Activated T-helper 1 cell treated with anti-CD3 and anti-CD28 coated beads, Interleukin-12 subunit alpha, Interleukin-12 subunit beta, Interleukin-2, Interleukin-4 antibody, amounts not matched to agents 30 ng/mL and 10 ng/mL and 1 ng/mL, durations not matched to agents 14 hours and 24 hours and 36 hours (primary cell): ENCODE measurements at regions of chr1 and their contacts with region 1.

Region 1: GRCh38 chr1:28581536-28582247 is 10.4 kb upstream of the RAB42 start:
- DNase-seq: peak; percentile 94
- H3K4me3 Mint-ChIP-seq: peak overlapping the region; percentile 99
- H3K27ac Mint-ChIP-seq: peak overlapping the region; percentile 85
- H3K4me1 Mint-ChIP-seq: peaks cover 31% of the 10 kb centered on the region
- H3K27me3 Mint-ChIP-seq: no peaks in the 10 kb centered on the region

Region 2: GRCh38 chr1:28369371-28370238 is 212.1 kb before region 1 on chr1 and contains the start of gene PHACTR4:
- intact Hi-C with region 1: loop called (anchors 5 kb)
- DNase-seq: peak; percentile 78
- H3K4me3 Mint-ChIP-seq: peak within 1 kb of the TSS; percentile 91
- H3K27ac Mint-ChIP-seq: peak within 1 kb of the TSS; percentile 95
- H3K4me1 Mint-ChIP-seq: peaks cover 36% of the 10 kb centered on the region
- H3K27me3 Mint-ChIP-seq: peaks cover 3% of the 10 kb centered on the region
- total RNA-seq, gene PHACTR4: 28.9 and 31.8 TPM in 2 replicates

Region 3: GRCh38 chr1:28518000-28518744 is 63.5 kb before region 1 on chr1:
- intact Hi-C with region 1: loop called (anchors 1 kb)
- DNase-seq: peak; percentile 86
- H3K4me3 Mint-ChIP-seq: peak overlapping the region; percentile 92
- H3K27ac Mint-ChIP-seq: peak overlapping the region; percentile 92
- H3K4me1 Mint-ChIP-seq: peaks cover 33% of the 10 kb centered on the region
- H3K27me3 Mint-ChIP-seq: no peaks in the 10 kb centered on the region

Region 4: DNA sequence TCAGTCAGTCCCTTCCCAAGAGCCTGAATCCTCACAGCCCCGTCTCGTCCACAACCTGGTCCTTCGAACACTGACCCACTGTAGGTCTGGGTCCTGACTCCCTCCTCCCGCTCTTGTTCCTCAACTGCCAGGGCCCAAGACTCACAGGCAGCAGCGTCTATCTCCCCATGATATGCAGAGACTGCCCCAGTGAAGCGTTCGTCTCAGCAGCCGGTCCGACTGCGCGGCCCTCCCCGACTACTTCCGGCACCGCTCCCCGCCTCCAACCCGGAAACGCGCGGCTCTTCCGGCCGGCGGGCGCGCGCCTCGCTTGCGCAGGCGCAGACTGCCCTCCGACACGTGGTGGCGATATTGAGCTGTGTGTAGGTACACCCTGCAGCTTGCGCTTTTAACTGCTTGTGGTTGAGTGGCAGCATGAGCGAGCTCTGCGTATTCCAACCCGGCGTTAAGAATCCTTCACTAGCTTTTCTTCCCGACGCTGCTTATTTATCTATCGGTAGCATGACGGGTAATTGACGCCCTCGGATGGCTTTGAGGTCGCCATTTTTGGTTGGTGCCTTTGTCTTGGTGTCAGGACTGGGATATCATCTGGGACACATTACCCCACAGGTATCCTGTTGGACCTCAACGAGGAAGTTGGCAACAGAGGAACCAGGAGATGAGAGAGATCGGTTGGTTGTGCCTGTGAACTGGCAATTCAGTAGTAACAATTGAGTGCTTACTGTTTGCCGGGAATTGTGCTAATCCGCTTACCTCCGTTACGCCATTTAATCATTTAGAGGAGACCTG is 61.3 kb after region 1 on chr1 and contains the start of gene TAF12:
- intact Hi-C with region 1: loop called (anchors 1 kb)
- DNase-seq: peak; percentile 85
- H3K4me3 Mint-ChIP-seq: peak within 1 kb of the TSS; percentile 99
- H3K27ac Mint-ChIP-seq: peak within 1 kb of the TSS; percentile 99
- H3K4me1 Mint-ChIP-seq: peaks cover 55% of the 10 kb centered on the region
- H3K27me3 Mint-ChIP-seq: no peaks in the 10 kb centered on the region
- total RNA-seq, gene TAF12: 32.8 and 33.9 TPM in 2 replicates

Region 5: DNA sequence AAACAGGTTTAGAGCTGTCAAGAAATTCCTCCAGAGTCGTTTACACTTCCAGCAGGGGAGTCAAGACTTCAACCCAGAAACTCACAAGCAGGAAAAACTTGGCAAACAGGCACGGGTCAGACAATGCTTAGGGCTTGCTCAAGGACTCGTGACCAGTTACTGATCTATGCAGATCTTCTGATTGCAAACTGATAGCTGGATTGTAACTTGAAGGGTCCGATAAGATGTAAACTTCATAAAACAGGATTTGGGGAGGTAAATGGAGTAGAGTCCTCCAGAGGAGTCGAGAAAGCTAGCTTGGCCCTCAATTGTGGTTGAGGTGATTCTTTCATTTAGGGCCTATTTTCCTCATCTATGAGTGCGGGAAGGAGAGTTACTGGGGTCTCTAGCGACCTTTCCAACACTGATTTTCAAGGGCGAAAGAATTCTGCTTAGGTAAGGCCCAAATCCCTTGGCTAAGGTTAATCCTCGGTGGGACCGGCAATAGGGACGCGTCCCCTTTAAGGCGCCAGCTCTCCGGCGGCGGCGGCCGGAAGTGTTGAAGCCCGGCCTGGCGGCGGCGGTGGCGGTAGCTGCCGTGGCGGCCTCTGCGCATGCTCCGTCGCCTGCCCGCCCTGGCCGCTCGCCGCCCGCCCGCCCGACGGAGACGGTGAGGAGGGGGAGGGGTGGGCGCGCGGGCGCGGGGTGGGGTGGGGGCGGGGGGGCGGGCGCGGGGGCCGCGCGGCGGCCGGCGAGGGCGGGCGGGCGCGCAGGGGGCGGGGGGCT is 86.7 kb after region 1 on chr1 and contains the start of gene GMEB1:
- intact Hi-C with region 1: loop called (anchors 1 kb)
- DNase-seq: peak; percentile 87
- H3K4me3 Mint-ChIP-seq: peak within 1 kb of the TSS; percentile 90
- H3K27ac Mint-ChIP-seq: peak within 1 kb of the TSS; percentile 98
- H3K4me1 Mint-ChIP-seq: peaks cover 11% of the 10 kb centered on the region
- H3K27me3 Mint-ChIP-seq: no peaks in the 10 kb centered on the region
- total RNA-seq, gene GMEB1: 27.2 and 30.3 TPM in 2 replicates

Region 6: GRCh38 chr1:28926629-28927265 is 345.1 kb after region 1 on chr1:
- intact Hi-C with region 1: loop called (anchors 5 kb)
- DNase-seq: peak; percentile 57
- H3K4me3 Mint-ChIP-seq: peak overlapping the region; percentile 59
- H3K27ac Mint-ChIP-seq: peak overlapping the region; percentile 84
- H3K4me1 Mint-ChIP-seq: peaks cover 45% of the 10 kb centered on the region
- H3K27me3 Mint-ChIP-seq: no peaks in the 10 kb centered on the region

Region 7: GRCh38 chr1:28950449-28950848 is 368.8 kb after region 1 on chr1:
- intact Hi-C with region 1: no loop called
- DNase-seq: no peak
- H3K4me3 Mint-ChIP-seq: no peak overlapping the region
- H3K27ac Mint-ChIP-seq: no peak overlapping the region
- H3K4me1 Mint-ChIP-seq: peaks cover 6% of the 10 kb centered on the region
- H3K27me3 Mint-ChIP-seq: no peaks in the 10 kb centered on the region